ENCODE measurements at regions of chr1 and their contacts with region 1.

Region 1: DNA sequence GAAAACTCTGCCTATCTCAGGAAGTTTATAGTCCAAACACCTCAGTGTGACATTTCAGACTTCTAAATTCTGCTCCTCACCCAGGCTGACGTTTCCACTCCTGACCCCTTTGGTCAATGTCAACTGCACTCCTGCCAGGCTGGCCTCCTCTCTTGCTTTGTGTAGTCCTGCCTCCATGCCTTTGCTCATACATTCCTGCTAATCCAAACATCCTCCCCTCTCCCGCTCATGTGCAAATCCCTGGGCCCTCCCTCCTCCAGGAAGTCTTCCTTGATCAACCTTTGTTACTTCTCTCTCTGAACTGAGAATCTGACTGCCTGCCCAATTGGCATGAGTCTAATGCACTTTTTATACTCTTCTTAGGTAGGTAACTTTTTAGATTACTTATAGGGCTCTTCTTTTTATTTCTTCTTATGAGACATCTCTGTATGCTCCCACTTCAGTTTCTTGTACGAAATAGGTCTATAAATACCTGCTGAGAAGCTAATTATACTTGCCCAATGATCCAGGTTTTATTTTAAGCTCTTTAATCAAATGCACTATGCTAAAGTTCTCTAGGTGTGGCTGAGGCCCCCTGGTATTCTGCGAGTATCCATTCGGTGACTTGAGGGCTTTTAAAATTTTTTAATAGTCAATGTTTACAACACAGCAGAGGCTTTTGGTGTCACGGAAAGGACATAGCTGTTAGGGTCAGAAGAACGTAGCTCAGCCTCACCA is 128.1 kb downstream of the PLXNA2 start:
- DNase-seq: no peak
- ATAC-seq: no peak
- H3K4me3 Mint-ChIP-seq: no peak overlapping the region
- H3K27ac Mint-ChIP-seq: no peak overlapping the region
- H3K4me1 Mint-ChIP-seq: no peaks in the 10 kb centered on the region
- H3K27me3 Mint-ChIP-seq: no peaks in the 10 kb centered on the region
- CTCF ChIP-seq: no peak

Region 2: DNA sequence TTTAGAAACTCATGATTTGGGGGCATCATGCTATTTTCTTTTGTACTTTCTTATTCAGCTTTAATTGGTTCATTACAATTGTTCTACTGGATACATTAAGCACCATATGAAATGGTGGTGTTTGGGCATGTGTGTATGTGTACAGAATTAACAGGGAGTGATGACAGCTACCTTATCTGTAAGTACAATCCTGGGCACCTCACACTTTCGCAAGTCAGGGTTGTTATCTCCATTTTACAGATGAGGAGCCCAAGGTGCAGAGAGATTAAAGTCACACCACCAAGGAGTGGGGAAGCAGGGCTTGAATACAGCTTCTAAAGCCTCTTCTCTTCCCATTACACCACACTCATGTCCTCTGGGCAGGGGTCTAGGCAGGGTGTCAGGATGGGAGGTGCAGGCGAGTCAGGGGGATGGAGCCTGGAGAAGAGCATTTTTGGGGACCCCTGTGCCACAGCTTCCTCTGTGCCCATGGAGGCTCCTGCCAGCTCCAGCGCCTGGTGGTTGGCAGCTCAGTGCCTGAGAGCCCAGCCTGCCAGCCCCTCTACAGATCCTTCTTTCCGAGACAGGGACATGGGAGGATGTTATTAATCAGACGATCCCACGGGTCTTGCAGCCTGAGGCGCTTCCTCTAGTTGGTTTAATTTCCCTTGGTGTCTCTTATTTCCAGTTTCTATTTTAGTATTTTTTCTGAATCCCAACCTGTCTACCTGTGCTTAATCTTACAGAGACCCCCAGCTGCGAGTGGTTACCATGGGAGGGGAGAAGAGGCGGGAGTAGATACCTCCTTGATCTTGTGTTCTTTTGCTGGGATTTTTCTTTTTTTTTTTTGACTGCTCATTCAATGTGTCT is 78.9 kb before region 1 on chr1:
- CTCF ChIA-PET with region 1: no interaction called
- POLR2A ChIA-PET with region 1: no interaction called
- intact Hi-C with region 1: no loop called
- DNase-seq: no peak
- ATAC-seq: no peak
- H3K4me3 Mint-ChIP-seq: no peak overlapping the region
- H3K27ac Mint-ChIP-seq: no peak overlapping the region
- H3K4me1 Mint-ChIP-seq: no peaks in the 10 kb centered on the region
- H3K27me3 Mint-ChIP-seq: no peaks in the 10 kb centered on the region
- CTCF ChIP-seq: no peak

Region 3: DNA sequence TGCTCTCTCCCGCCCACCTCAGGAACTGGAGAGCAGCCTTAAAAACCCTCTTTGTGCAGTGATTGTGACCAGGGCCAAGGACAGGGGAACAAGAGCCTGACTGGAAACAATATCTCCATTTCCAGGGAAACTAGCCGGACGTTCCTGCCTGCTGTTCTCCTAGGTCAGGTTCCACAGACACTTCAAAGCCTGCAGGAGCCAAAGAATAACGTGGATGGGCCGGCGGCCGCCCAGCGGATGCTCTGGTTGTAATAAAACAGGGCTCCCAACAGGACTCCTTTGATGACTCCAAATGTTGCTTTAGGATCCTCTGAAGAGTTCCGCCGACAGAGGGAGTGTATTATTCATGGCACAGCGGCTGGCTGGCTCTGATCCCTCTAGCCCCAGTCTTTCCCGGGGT is 34.1 kb before region 1 on chr1:
- CTCF ChIA-PET with region 1: no interaction called
- POLR2A ChIA-PET with region 1: no interaction called
- intact Hi-C with region 1: no loop called
- DNase-seq: no peak
- ATAC-seq: no peak
- H3K4me3 Mint-ChIP-seq: no peak overlapping the region
- H3K27ac Mint-ChIP-seq: no peak overlapping the region
- H3K4me1 Mint-ChIP-seq: peaks cover 10% of the 10 kb centered on the region
- H3K27me3 Mint-ChIP-seq: no peaks in the 10 kb centered on the region
- CTCF ChIP-seq: no peak

Region 4: DNA sequence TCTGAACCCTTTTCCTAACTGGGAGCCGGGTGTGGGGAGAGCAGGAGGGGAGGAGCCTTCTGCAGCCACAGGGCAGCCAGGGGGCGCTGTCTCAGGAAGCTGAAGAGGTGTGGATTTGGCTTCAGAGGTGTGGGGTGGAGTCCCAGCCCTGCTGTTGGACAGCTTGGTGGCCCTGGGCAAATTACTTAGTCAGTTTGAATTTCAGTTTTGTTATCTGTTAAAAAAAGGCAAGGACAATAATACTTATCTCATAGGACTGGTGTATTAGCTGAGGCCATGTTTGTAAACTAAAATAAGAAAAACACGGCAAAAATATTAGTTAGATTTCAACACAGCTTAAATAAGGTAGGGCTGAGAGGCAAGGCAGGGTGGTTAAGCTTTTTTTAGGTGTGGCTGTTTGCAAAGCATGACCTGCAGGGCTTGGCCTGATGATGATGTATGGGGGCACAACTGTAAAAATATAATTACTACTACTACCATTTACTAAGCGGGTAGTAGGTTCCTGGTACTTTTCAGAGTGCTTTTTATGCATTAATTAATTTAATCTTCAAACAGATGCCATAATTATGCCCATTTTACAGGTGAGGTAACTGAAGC is 16.3 kb after region 1 on chr1:
- CTCF ChIA-PET with region 1: interaction called, 31 read pairs
- POLR2A ChIA-PET with region 1: no interaction called
- intact Hi-C with region 1: no loop called
- DNase-seq: peak; percentile 81
- ATAC-seq: peak; percentile 93
- H3K4me3 Mint-ChIP-seq: no peak overlapping the region
- H3K27ac Mint-ChIP-seq: no peak overlapping the region
- H3K4me1 Mint-ChIP-seq: peaks cover 4% of the 10 kb centered on the region
- H3K27me3 Mint-ChIP-seq: peaks cover 16% of the 10 kb centered on the region
- CTCF ChIP-seq: peak; percentile 92

Measured in activated CD8-positive, alpha-beta T cell treated with anti-CD3 and anti-CD28 coated beads for 36 hours (primary cell).